Activated T-helper 1 cell treated with anti-CD3 and anti-CD28 coated beads, Interleukin-12 subunit alpha, Interleukin-12 subunit beta, Interleukin-2, Interleukin-4 antibody, amounts not matched to agents 30 ng/mL and 10 ng/mL and 1 ng/mL, durations not matched to agents 14 hours and 24 hours and 36 hours (primary cell): ENCODE measurements at regions of chr11 and their contacts with region 1.

Region 1: GRCh38 chr11:65040847-65041621 is at the start of gene SAC3D1:
- DNase-seq: peak; percentile 90
- H3K4me3 Mint-ChIP-seq: peak within 1 kb of the TSS; percentile 90
- H3K27ac Mint-ChIP-seq: peak within 1 kb of the TSS; percentile 93
- H3K4me1 Mint-ChIP-seq: peaks cover 19% of the 10 kb centered on the region
- H3K27me3 Mint-ChIP-seq: no peaks in the 10 kb centered on the region
- total RNA-seq, gene SAC3D1: 17.4 and 17.7 TPM in 2 replicates

Region 2: DNA sequence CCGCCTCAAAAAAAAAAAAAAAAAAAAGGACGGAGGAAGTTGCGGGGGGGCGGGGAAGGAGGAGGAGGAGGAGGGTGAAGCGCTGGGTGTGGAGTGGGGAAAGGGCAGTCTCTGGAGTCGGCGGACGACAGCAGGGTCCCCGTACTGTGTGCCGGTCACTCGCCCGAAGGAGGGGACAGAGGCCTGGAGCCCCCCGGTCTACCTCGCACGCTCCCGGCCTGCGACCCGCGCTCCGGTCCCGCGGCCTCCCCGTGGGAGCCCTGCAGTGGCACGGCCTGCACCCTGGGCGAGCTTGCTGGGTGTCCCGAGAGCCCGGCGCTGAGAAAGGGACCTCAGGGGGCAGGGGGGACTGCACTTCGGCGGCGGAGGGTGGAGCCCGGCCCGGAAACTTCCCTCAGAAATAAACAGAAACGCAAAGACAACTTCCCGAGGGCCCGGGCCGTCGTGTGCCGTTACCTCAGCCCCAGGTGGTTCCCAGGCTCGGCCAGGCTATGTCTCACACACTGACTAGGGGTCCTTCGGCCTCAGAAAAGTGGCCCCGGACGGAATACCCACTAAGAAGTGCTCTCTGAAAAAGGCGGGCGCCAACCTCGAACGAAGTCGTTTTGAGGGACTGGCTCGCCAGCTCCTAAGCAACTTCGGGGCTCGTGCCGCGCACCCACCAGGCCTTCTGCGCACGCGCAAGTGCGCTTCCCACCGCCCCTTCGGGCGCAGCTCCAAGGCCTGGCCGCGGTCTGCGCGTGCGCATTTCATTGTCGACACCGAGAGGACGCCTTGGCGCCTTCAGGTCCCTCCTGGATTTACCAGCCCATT is 69.4 kb before region 1 on chr11 and contains the start of gene MAJIN:
- intact Hi-C with region 1: no loop called
- DNase-seq: peak; percentile 77
- H3K4me3 Mint-ChIP-seq: peak within 1 kb of the TSS; percentile 57
- H3K27ac Mint-ChIP-seq: peak within 1 kb of the TSS; percentile 60
- H3K4me1 Mint-ChIP-seq: peaks cover 31% of the 10 kb centered on the region
- H3K27me3 Mint-ChIP-seq: peaks cover 4% of the 10 kb centered on the region
- total RNA-seq, gene MAJIN: not detected in 2 replicates

Region 3: GRCh38 chr11:65078151-65078550 is 37.1 kb after region 1 on chr11:
- intact Hi-C with region 1: loop called (anchors 1 kb)
- DNase-seq: peak; percentile 61
- H3K4me3 Mint-ChIP-seq: peak overlapping the region; percentile 37
- H3K27ac Mint-ChIP-seq: peak overlapping the region; percentile 71
- H3K4me1 Mint-ChIP-seq: peaks cover 53% of the 10 kb centered on the region
- H3K27me3 Mint-ChIP-seq: no peaks in the 10 kb centered on the region

Region 4: GRCh38 chr11:65095974-65096806 is 55.2 kb after region 1 on chr11 and contains the start of gene VPS51:
- intact Hi-C with region 1: loop called (anchors 1 kb)
- DNase-seq: peak; percentile 80
- H3K4me3 Mint-ChIP-seq: peak within 1 kb of the TSS; percentile 91
- H3K27ac Mint-ChIP-seq: peak within 1 kb of the TSS; percentile 94
- H3K4me1 Mint-ChIP-seq: peaks cover 11% of the 10 kb centered on the region
- H3K27me3 Mint-ChIP-seq: no peaks in the 10 kb centered on the region
- total RNA-seq, gene VPS51: 137 and 139 TPM in 2 replicates

Region 5: GRCh38 chr11:65290448-65291165 is 249.6 kb after region 1 on chr11:
- intact Hi-C with region 1: no loop called
- DNase-seq: no peak
- H3K4me3 Mint-ChIP-seq: no peak overlapping the region
- H3K27ac Mint-ChIP-seq: peak overlapping the region; percentile 12
- H3K4me1 Mint-ChIP-seq: no peaks in the 10 kb centered on the region
- H3K27me3 Mint-ChIP-seq: no peaks in the 10 kb centered on the region